ENCODE measurements at regions of chr12 and their contacts with region 1.

Region 1: DNA sequence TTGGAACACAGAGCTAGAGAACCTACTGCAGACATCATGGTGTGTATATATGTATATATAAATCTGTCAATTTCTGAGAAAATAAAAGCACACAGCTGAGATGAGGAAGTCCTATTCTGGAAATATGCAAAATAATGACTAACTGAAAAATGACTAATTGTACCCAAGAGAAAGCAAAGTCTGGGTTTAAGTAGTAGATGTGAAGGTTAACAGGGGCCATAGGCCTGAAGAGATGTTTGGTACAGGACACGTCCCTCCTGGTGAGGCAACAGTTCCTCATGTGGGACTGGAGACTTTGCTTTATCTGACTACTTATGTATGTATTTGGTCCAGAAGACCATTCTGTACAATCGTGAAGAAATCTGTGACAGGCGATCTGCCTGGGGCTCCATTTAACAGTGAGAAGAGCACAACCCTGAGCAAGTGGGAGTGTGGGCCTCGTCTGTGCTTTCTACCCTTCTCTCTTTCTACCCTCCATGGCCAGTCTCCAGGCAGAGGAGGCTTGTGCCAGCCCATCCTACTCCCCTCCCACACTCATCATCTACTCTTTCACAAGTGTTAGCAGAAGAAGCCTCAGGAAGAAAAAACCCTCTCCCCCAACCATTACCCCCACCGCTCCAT is 67.5 kb downstream of the SLC41A2 start:
- DNase-seq: no peak
- ATAC-seq: no peak
- H3K4me3 ChIP-seq: no peak overlapping the region
- H3K4me3 Mint-ChIP-seq: no peak overlapping the region
- H3K27ac ChIP-seq: no peak overlapping the region
- H3K27ac Mint-ChIP-seq: no peak overlapping the region
- H3K4me1 ChIP-seq: no peaks in the 10 kb centered on the region
- H3K4me1 Mint-ChIP-seq: no peaks in the 10 kb centered on the region
- H3K27me3 ChIP-seq: no peaks in the 10 kb centered on the region
- H3K27me3 Mint-ChIP-seq: peaks cover 0 to 13% of the 10 kb centered on the region in 2 donors

Region 2: DNA sequence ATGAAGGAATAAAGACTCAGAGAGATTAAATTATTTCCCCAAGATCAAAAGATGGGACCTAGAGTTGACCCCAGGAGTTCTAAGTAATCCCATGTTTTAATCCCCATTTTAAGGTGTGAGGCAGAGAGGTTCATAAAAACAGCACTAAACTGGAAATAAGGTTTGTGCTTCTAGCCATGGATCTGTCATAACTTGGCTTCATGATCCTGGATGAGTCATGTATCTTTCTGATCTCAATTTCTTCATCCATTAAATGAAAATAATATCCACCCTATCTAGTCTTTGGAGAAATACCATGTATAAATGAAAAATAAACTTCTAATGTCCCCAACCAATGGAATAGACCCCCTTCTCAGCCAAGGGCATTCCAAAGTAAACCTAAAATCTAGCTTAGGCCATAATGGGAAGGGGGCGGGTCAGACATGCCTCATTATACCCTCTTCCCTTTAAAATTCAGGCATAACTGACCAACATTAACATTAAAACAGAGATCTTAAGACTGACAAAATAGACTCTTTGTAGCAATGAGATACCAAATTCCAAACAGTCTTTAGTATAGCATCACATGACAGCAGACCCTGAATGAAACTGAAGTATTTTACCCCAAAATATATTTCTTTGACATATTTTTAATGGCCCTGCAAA is 19.7 kb after region 1 on chr12:
- CTCF ChIA-PET with region 1: no interaction called
- POLR2A ChIA-PET with region 1: interaction called in 1 of 2 experiments, 10 read pairs
- DNase-seq: no peak
- ATAC-seq: no peak
- H3K4me3 ChIP-seq: no peak overlapping the region
- H3K4me3 Mint-ChIP-seq: no peak overlapping the region
- H3K27ac ChIP-seq: no peak overlapping the region
- H3K27ac Mint-ChIP-seq: no peak overlapping the region
- H3K4me1 ChIP-seq: no peaks in the 10 kb centered on the region
- H3K4me1 Mint-ChIP-seq: no peaks in the 10 kb centered on the region
- H3K27me3 ChIP-seq: no peaks in the 10 kb centered on the region
- H3K27me3 Mint-ChIP-seq: no peaks in the 10 kb centered on the region